T-cell (primary cell): ENCODE measurements at regions of chr11 and their contacts with region 1.

Region 1: DNA sequence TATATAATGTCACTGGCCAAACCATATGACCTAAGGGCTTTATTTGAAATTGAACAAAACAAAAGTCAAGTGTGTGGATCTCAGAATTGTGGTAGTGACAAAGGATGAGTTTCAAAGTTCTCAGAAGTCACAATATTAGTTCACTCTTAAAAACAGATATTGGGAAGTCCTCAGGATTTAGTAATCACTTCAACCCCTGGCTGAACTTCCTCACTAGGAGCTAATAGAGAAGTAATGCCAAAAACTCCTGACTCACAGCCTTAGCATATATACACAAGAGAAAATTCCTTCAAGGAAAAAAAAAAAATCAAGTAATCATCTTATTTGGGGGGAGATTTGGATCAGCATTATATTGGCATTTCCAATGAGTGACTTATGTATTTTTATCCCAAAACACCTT is 75.6 kb upstream of the APOA1 start:
- DNase-seq: no peak
- ATAC-seq: no peak
- H3K4me3 ChIP-seq: no peak overlapping the region
- H3K4me3 Mint-ChIP-seq: no peak overlapping the region
- H3K27ac ChIP-seq: no peak overlapping the region
- H3K27ac Mint-ChIP-seq: peak overlapping the region in 1 of 2 donors; percentile 7
- H3K4me1 ChIP-seq: peaks cover 0 to 3% of the 10 kb centered on the region in 2 experiments
- H3K4me1 Mint-ChIP-seq: peaks cover 23 to 26% (median 26%) of the 10 kb centered on the region in 3 donors
- H3K27me3 ChIP-seq: no peaks in the 10 kb centered on the region
- H3K27me3 Mint-ChIP-seq: no peaks in the 10 kb centered on the region

Region 2: DNA sequence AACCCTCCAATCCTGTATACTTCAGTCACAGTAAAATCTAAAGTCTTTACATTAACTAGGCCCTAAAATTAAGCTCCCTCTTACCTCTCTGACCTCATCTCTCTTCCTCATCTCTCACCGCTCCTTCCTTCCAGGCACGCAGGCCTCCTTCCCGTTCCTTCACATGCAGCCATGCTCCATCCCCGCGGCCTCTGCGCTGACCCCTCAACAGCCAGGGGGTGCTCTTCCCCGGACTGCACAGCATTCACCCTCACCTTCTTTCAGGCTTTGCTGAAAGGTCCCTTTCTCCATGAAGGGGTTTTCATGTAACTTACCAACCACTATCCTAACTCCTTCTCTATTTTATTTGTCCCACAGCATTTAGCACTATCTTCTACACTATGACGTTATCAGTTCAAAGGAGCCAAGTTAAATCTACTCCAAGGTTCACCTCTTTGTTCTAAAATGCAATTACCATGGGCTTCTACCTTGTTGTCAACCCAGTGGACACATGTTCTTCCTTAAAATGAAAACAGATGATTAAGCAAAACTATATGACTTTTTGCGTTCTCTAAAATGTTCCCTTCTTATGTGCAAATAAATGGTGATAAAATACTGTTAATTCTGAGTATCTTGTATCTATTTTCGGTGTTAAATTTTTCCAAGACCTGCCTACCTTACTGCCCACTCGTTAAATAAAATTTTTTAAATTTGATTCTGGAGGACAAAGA is 17.8 kb before region 1 on chr11:
- CTCF ChIA-PET with region 1: no interaction called
- POLR2A ChIA-PET with region 1: interaction called in 1 of 2 experiments, 11 read pairs
- DNase-seq: peak in 10 of 35 experiments; percentile 1 to 46 (median 9)
- ATAC-seq: peak in 3 of 4 experiments; percentile 33 to 63 (median 56)
- H3K4me3 ChIP-seq: no peak overlapping the region
- H3K4me3 Mint-ChIP-seq: no peak overlapping the region
- H3K27ac ChIP-seq: no peak overlapping the region
- H3K27ac Mint-ChIP-seq: peak overlapping the region; percentile 21 to 71
- H3K4me1 ChIP-seq: peaks cover 0 to 4% of the 10 kb centered on the region in 2 experiments
- H3K4me1 Mint-ChIP-seq: peaks cover 10 to 27% (median 20%) of the 10 kb centered on the region in 3 donors
- H3K27me3 ChIP-seq: no peaks in the 10 kb centered on the region
- H3K27me3 Mint-ChIP-seq: no peaks in the 10 kb centered on the region

Region 3: DNA sequence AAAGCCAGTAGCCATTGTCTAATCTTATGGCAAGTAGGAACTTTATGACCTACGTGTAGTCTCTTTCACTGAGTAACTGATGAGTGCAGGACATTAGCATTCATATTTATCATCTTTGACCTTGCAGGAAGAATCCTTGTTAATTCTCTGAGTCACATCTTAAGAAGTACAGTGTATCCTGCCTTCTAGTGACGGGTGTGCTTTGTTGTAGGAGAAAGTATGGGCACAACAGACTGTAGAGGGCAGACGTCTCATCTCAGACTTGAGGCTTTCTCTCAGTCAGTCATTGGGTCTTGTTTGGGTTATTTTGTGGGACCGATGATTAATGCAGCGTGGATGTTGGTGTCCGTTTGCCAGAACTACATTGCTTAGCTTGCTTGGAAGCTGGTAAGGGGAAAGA is 326.3 kb after region 1 on chr11:
- CTCF ChIA-PET with region 1: no interaction called
- POLR2A ChIA-PET with region 1: no interaction called
- DNase-seq: no peak
- ATAC-seq: no peak
- H3K4me3 ChIP-seq: no peak overlapping the region
- H3K4me3 Mint-ChIP-seq: no peak overlapping the region
- H3K27ac ChIP-seq: no peak overlapping the region
- H3K27ac Mint-ChIP-seq: no peak overlapping the region
- H3K4me1 ChIP-seq: no peaks in the 10 kb centered on the region
- H3K4me1 Mint-ChIP-seq: peaks cover 2 to 5% (median 3%) of the 10 kb centered on the region in 3 donors
- H3K27me3 ChIP-seq: no peaks in the 10 kb centered on the region
- H3K27me3 Mint-ChIP-seq: no peaks in the 10 kb centered on the region